Brain microvascular endothelial cell (primary cell): ENCODE measurements at regions of chr1 and their contacts with region 1.

Region 1: DNA sequence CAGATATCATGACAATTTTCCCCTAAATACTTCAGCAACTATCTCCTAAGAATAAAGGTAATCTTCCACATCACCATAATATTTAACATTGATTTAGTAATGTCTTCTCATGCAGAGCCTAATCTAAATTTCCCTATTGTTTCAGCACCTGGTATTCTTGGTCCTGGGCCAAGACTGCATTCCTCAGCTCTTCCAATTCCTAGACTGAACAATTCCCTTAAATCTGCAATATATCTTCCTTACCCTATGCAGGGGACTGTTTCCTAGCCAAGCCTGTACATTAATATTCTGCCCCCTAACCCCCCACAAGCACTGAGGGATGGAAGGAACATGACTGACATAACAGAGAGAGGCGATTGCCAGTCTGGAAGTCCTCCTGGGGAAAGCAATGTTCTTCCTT is 28.7 kb upstream of the DISP1 start:
- DNase-seq: no peak
- H3K4me3 ChIP-seq: no peak overlapping the region
- H3K27ac ChIP-seq: no peak overlapping the region
- H3K27me3 ChIP-seq: peaks cover 3% of the 10 kb centered on the region
- CTCF ChIP-seq: no peak

Region 2: GRCh38 chr1:223081181-223081994 is 295.3 kb after region 1 on chr1:
- in situ Hi-C with region 1: loop called (anchors 10 kb)
- DNase-seq: peak; percentile 75
- H3K4me3 ChIP-seq: peak overlapping the region; percentile 45
- H3K27ac ChIP-seq: no peak overlapping the region
- H3K27me3 ChIP-seq: peaks cover 3% of the 10 kb centered on the region
- CTCF ChIP-seq: peak; percentile 92